Common myeloid progenitor, CD34-positive (primary cell): ENCODE measurements at regions of chr2 and their contacts with region 1.

Region 1: GRCh38 chr2:227766373-227766883 is 20.7 kb downstream of the SCYGR8 start:
- DNase-seq: peak; percentile 48 to 65 (median 59)
- H3K4me3 ChIP-seq: no peak overlapping the region
- H3K27ac ChIP-seq: no peak overlapping the region
- H3K4me1 ChIP-seq: no peaks in the 10 kb centered on the region
- H3K27me3 ChIP-seq: no peaks in the 10 kb centered on the region

Region 2: DNA sequence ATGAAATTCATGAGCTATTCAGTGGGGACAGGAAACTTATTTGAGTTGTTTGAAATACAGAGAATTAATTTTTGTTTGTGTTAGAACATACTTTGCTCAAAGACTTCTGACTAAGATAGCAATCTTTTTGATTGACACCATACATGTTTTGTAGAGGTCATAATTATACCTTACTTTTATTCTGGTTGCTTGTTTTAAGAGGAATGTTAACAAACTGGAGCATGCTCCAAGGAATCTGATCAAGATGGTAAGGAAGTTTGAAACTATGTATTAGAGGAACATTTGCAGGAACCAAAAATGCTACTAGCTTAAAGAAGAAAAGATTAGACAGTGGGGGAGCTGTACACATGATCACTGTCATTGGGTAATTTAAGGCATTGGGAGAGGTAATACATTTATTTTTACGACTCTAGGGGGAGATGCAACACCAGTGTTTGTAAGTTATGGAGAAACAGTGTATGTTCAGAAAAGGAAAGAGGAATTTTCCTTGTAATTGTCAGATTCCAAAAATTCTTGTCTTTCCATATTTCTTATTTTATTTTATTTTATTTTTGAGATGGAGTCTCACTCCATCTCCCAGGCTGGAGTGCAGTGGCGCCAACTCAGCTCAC is 286.5 kb before region 1 on chr2:
- CTCF ChIA-PET with region 1: interaction called, 14 read pairs
- POLR2A ChIA-PET with region 1: no interaction called
- DNase-seq: peak in 2 of 3 donors; percentile 42 to 53
- H3K4me3 ChIP-seq: no peak overlapping the region
- H3K27ac ChIP-seq: no peak overlapping the region
- H3K4me1 ChIP-seq: peaks cover 0 to 15% (median 5%) of the 10 kb centered on the region in 4 experiments
- H3K27me3 ChIP-seq: no peaks in the 10 kb centered on the region

Region 3: DNA sequence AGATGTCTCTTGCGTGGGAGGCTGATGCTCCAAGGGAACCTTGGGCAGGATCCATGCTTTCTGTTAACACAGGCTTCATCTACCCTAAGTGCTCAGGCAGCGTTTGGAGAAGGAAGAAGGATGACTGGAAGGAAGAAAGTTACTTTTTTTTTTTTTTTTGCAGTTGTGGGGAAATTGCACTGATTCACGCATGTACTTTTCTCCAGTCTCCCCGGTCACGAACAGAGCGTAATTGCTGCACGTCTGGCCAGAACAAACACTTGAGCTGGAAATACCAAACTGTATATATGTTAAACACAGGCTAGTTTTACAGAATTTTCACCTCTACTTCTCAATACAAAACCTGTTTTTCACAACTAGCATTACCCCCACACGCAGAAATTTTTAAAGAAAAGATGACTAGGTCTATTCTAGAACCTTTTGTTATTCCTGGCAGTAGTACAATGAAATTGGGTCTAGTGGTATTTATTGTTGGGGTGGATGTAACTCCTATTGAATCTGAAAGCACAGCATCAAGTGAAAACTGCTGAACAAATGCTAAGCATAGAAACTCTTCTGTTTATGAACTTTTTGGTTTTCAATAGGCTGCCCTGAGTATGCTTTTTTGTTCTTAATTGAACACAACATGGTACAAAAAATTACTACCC is 109.1 kb before region 1 on chr2:
- CTCF ChIA-PET with region 1: interaction called, 15 read pairs
- POLR2A ChIA-PET with region 1: no interaction called
- DNase-seq: no peak
- H3K4me3 ChIP-seq: no peak overlapping the region
- H3K27ac ChIP-seq: no peak overlapping the region
- H3K4me1 ChIP-seq: no peaks in the 10 kb centered on the region
- H3K27me3 ChIP-seq: no peaks in the 10 kb centered on the region

Region 4: GRCh38 chr2:227799202-227799601 is 32.8 kb after region 1 on chr2:
- CTCF ChIA-PET with region 1: no interaction called
- POLR2A ChIA-PET with region 1: no interaction called
- DNase-seq: no peak
- H3K4me3 ChIP-seq: no peak overlapping the region
- H3K27ac ChIP-seq: no peak overlapping the region
- H3K4me1 ChIP-seq: no peaks in the 10 kb centered on the region
- H3K27me3 ChIP-seq: no peaks in the 10 kb centered on the region